A549 (cell line): ENCODE measurements at regions of chr3 and their contacts with region 1.

Region 1: DNA sequence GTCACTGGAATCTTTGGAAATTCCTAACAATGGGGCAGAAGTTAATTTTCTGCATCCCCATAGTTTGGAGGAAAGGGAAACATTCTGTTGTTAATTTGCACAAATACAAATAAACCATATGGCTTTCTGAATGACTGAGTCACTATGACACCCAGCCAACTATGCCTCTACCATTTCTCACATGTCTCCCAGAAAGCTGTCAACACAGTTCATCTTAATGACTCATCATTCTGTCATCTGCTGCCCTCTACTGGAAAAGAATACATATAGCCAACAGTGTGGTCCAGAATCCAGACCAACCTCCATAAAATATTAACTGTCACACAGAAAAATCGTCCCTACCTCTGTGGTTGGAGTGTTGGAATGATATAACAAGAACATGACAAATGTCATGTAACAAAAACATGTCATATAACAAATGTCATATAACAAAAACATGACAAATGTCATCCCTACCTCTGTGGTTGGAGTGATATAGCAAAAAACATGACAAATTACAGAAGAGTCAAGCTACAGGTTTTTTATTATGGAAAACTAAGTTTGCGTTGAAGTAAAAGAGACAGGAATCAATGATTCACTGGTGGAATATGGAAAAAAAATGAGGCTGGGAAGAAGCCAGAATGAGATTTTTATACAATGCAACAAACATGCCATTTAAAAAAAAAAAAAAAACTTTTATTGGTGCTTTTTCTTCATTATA is 47.7 kb upstream of the GYG1 start:
- DNase-seq: peak; percentile 83 to 88
- ATAC-seq: peak; percentile 90 to 97
- H3K4me3 ChIP-seq: no peak overlapping the region
- H3K27ac ChIP-seq: no peak overlapping the region
- H3K4me1 ChIP-seq: peaks cover 8% of the 10 kb centered on the region; the same call in 2 of the 3 replicates
- CTCF ChIP-seq: peak; percentile 87
- EP300 ChIP-seq: no peak
- POLR2A ChIP-seq: no peak
- RAD21 ChIP-seq: peak; percentile 84 to 85

Region 2: GRCh38 chr3:148428862-148429605 is 514.6 kb before region 1 on chr3:
- CTCF ChIA-PET with region 1: no interaction called
- POLR2A ChIA-PET with region 1: no interaction called
- DNase-seq: no peak
- ATAC-seq: no peak
- H3K4me3 ChIP-seq: no peak overlapping the region
- H3K27ac ChIP-seq: no peak overlapping the region
- H3K4me1 ChIP-seq: no peaks in the 10 kb centered on the region
- CTCF ChIP-seq: no peak
- EP300 ChIP-seq: no peak
- POLR2A ChIP-seq: no peak
- RAD21 ChIP-seq: no peak

Region 3: DNA sequence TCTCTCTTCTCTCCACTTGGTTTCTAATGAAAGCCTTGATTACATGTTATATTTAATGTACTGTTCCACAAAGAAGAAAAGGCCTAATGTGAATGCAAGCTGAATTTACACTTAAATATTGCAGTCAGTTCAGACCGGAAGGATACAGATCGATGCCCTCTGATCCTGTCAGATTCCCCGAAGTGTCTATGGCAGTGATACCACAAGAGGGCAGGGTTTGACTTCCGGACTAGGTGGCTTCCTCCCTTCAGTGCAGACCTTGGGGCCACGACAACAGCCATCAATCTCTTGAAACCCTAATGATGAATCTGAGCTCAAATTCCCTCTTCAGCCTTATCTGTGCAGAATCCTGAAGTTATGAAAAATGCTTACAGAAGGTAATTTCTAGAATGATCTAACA is 216.4 kb before region 1 on chr3:
- CTCF ChIA-PET with region 1: interaction called, 12 read pairs
- POLR2A ChIA-PET with region 1: no interaction called
- DNase-seq: peak; percentile 23 to 62
- ATAC-seq: peak; percentile 74 to 93; a peak in 5 of 6 replicates
- H3K4me3 ChIP-seq: no peak overlapping the region
- H3K27ac ChIP-seq: no peak overlapping the region
- H3K4me1 ChIP-seq: peaks cover 12% of the 10 kb centered on the region; the same call in 2 of the 3 replicates
- CTCF ChIP-seq: peak; percentile 56
- EP300 ChIP-seq: no peak
- POLR2A ChIP-seq: no peak
- RAD21 ChIP-seq: peak; percentile 64 to 67

Region 4: GRCh38 chr3:148861277-148861869 is 82.3 kb before region 1 on chr3:
- CTCF ChIA-PET with region 1: interaction called, 105 read pairs
- POLR2A ChIA-PET with region 1: no interaction called
- DNase-seq: peak; percentile 29 to 50
- ATAC-seq: peak; percentile 67 to 79; a peak in 4 of 6 replicates
- H3K4me3 ChIP-seq: no peak overlapping the region
- H3K27ac ChIP-seq: no peak overlapping the region
- H3K4me1 ChIP-seq: no peaks in the 10 kb centered on the region
- CTCF ChIP-seq: peak; percentile 89
- EP300 ChIP-seq: no peak
- POLR2A ChIP-seq: no peak
- RAD21 ChIP-seq: peak; percentile 77

Region 5: DNA sequence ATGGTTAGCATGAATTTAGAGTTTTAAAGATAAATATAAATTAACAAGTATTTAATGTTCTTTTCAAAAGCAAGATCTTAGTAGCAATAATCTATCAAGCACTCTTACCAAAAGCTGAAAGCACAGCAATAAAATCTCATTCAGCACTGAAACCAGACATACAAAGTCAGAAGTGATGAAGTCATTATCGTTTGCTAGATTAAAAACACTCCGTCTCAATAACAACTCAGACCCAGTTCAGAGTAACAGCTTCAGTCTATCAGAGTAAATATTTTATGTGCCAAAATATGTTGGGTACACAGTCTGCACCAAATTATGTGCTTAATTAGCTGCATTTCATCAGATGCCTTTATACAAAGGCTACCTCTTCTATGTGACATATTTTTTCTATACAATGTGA is 37.0 kb before region 1 on chr3:
- CTCF ChIA-PET with region 1: no interaction called
- POLR2A ChIA-PET with region 1: no interaction called
- DNase-seq: no peak
- ATAC-seq: no peak
- H3K4me3 ChIP-seq: no peak overlapping the region
- H3K27ac ChIP-seq: no peak overlapping the region
- H3K4me1 ChIP-seq: peaks cover 4% of the 10 kb centered on the region; the same call in 1 of the 3 replicates
- CTCF ChIP-seq: no peak
- EP300 ChIP-seq: no peak
- POLR2A ChIP-seq: no peak
- RAD21 ChIP-seq: no peak

Region 6: DNA sequence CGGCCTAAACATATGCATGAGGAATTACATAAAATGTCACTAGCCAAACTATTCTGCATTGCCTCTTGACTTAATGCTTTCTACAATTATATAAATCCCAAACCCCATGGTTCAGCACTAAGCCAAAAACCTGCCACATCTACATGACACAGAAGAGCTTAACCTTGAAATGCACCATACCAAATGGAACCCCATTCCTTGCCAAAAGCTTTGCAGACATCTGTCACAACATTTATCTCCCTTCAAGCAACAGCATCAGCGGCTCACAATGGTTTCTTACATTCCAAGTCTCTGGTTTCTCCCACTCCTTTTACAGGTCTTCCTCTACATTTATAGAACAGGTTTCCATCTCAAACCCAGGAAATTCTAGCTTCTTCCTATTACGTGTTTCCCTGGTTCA is 10.7 kb before region 1 on chr3:
- CTCF ChIA-PET with region 1: interaction called, 16 read pairs
- POLR2A ChIA-PET with region 1: no interaction called
- DNase-seq: no peak
- ATAC-seq: no peak
- H3K4me3 ChIP-seq: no peak overlapping the region
- H3K27ac ChIP-seq: no peak overlapping the region
- H3K4me1 ChIP-seq: no peaks in the 10 kb centered on the region
- CTCF ChIP-seq: no peak
- EP300 ChIP-seq: no peak
- POLR2A ChIP-seq: no peak
- RAD21 ChIP-seq: no peak

Region 7: DNA sequence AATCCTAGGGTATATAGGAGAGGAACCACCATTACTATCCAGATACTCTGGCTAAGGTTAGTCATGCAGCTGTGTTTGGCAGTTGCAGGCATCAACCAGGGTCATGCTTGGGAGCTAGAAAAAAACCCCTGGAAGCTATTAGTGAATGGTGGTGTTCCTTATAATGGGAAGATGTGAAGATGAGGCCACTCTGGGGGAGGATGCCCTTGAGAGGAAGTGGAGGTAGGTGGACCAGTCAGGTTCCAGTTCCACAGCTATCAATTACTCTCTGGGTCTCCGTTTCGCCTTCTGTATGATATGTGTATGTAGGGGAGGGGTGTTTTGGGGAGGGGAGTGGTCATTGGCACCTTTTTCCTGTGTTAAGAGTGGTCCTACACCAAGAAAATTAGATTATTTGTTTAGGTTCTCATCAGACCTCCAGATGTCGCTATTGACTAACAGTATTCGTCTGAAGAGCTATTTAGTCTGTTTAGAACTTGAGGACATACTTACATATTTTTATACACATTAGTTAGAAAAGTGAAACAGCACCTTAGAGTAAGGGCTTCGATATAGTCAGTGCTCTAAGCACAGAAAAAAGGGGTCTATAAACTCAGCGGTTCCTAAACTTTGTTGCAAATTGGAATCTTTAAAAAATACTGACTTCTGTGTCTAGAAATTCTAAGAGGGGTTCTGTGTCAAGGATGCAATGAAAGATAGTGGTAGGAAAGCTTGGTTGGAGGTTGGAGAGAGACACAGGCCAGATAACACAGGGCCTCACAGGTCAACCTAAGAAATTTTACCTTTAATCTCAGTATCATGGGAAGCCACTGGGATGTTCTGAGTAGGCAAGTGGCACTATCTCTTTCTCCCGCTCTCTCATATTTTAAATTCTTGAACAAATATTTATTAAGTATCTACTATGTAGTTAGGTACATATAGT is 176.7 kb after region 1 on chr3:
- CTCF ChIA-PET with region 1: no interaction called
- POLR2A ChIA-PET with region 1: no interaction called
- DNase-seq: peak; percentile 73 to 80
- ATAC-seq: peak; percentile 83 to 95
- H3K4me3 ChIP-seq: no peak overlapping the region
- H3K27ac ChIP-seq: peak overlapping the region; percentile 61 to 73
- H3K4me1 ChIP-seq: peaks cover 12% of the 10 kb centered on the region
- CTCF ChIP-seq: peak; percentile 94
- EP300 ChIP-seq: no peak
- POLR2A ChIP-seq: no peak
- RAD21 ChIP-seq: peak; percentile 95 to 97

Region 8: GRCh38 chr3:149527531-149528339 is 584.1 kb after region 1 on chr3:
- CTCF ChIA-PET with region 1: no interaction called
- POLR2A ChIA-PET with region 1: no interaction called
- DNase-seq: peak; percentile 39 to 75
- ATAC-seq: peak; percentile 76 to 83
- H3K4me3 ChIP-seq: no peak overlapping the region
- H3K27ac ChIP-seq: peak overlapping the region; percentile 70 to 81
- H3K4me1 ChIP-seq: peaks cover 59% of the 10 kb centered on the region
- CTCF ChIP-seq: peak; percentile 51
- EP300 ChIP-seq: no peak
- POLR2A ChIP-seq: no peak
- RAD21 ChIP-seq: peak; percentile 41 to 59